WTC11 (cell line): ENCODE measurements at regions of chr2 and their contacts with region 1.

Region 1: GRCh38 chr2:117814417-117815264 is at the start of gene DDX18:
- DNase-seq: peak; percentile 95
- ATAC-seq: peak; percentile 95
- H3K4me3 Mint-ChIP-seq: peak within 1 kb of the TSS; percentile 94
- H3K27ac Mint-ChIP-seq: peak within 1 kb of the TSS; percentile 98
- H3K4me1 Mint-ChIP-seq: peaks cover 28% of the 10 kb centered on the region
- H3K27me3 Mint-ChIP-seq: no peaks in the 10 kb centered on the region
- CTCF ChIP-seq: peak; percentile 93
- total RNA-seq, gene DDX18: 76.2 to 107 TPM (median 83.3 TPM) in 3 replicates

Region 2: DNA sequence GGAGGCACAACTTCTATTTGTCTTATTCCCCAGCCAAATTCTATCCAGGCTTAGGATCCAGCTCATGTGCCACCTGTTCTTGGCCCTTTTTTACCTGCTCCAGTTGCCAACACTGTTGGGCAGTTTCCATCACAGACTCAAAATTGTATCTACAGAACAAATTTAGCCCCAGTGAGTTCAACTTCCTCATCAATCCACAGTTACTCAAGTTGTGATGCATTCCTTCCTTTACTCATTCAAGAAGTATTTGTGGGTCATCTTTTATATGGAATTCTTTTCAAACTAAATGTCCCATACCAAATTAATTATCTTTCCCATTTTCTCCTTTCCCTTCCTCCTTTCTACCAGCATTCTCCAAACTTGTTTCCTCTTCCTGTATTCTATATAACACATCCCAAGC is 12.8 kb before region 1 on chr2:
- CTCF ChIA-PET with region 1: interaction called, 10 read pairs
- POLR2A ChIA-PET with region 1: no interaction called
- DNase-seq: no peak
- ATAC-seq: no peak
- H3K4me3 Mint-ChIP-seq: no peak overlapping the region
- H3K27ac Mint-ChIP-seq: no peak overlapping the region
- H3K4me1 Mint-ChIP-seq: peaks cover 16% of the 10 kb centered on the region
- H3K27me3 Mint-ChIP-seq: peaks cover 21% of the 10 kb centered on the region
- CTCF ChIP-seq: no peak

Region 3: DNA sequence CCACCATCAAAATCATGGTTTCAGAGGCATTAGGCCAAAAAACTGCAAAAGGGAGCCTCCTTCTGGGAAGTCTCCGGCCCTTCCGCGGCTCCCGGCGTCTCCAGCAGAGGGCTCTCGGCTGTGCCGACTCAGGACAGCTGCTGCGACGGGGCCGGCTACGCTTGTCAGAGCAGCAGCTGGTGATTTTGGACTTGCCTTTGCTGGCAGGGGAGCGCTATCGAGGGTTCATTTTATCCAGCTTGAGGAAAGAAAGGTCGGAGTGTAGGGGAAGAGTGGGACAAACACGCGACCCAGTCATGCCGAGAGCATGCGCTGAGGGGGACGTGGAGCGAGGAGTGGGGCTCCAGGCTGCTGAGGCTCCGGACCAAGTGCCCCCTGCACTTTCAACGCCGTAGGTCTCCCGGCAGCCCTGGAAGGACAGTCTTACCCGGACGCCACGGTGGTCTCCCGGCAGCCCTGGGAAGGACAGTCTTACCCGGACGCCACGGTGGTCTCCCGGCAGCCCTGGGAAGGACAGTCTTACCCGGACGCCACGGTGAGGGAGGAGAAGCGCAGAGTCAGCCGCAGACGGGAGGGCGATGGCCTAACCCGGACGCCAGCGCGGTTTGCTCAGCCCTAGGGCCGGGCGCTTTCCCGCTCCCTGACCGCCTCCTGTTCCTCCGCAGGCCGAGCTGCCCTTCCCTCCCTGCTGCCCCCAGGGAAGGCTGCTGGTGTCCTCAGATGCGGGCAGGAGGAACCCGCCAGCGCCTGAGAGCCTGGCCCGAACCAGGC is 21.5 kb after region 1 on chr2:
- CTCF ChIA-PET with region 1: interaction called, 11 read pairs
- POLR2A ChIA-PET with region 1: no interaction called
- DNase-seq: peak; percentile 88
- ATAC-seq: peak; percentile 85
- H3K4me3 Mint-ChIP-seq: peak overlapping the region; percentile 67
- H3K27ac Mint-ChIP-seq: no peak overlapping the region
- H3K4me1 Mint-ChIP-seq: peaks cover 15% of the 10 kb centered on the region
- H3K27me3 Mint-ChIP-seq: peaks cover 9% of the 10 kb centered on the region
- CTCF ChIP-seq: peak; percentile 46; the same call in 1 of the 2 replicates

Region 4: DNA sequence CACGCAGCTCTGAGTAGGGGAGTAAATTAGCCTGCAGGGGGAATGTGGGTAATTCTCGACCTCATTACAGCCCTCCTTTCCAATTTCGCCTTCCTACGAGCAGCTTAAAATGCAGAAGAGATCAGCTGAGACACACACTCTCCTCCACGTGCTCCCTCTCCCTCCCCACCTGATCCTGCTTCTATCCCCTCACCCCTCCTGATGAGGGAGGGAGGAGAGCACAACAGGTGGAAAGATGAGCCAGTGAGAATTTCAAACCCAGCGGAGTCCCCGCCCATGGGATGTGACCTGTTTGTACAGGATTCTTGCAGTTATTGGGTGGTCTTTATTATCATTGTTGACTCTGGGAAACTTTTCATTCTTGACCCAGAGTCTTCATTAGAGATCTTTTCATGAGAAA is 35.4 kb after region 1 on chr2:
- CTCF ChIA-PET with region 1: interaction called, 10 read pairs
- POLR2A ChIA-PET with region 1: no interaction called
- DNase-seq: peak; percentile 52
- ATAC-seq: peak; percentile 95
- H3K4me3 Mint-ChIP-seq: peak overlapping the region; percentile 59
- H3K27ac Mint-ChIP-seq: peak overlapping the region; percentile 80
- H3K4me1 Mint-ChIP-seq: peaks cover 40% of the 10 kb centered on the region
- H3K27me3 Mint-ChIP-seq: peaks cover 14% of the 10 kb centered on the region
- CTCF ChIP-seq: no peak

Region 5: DNA sequence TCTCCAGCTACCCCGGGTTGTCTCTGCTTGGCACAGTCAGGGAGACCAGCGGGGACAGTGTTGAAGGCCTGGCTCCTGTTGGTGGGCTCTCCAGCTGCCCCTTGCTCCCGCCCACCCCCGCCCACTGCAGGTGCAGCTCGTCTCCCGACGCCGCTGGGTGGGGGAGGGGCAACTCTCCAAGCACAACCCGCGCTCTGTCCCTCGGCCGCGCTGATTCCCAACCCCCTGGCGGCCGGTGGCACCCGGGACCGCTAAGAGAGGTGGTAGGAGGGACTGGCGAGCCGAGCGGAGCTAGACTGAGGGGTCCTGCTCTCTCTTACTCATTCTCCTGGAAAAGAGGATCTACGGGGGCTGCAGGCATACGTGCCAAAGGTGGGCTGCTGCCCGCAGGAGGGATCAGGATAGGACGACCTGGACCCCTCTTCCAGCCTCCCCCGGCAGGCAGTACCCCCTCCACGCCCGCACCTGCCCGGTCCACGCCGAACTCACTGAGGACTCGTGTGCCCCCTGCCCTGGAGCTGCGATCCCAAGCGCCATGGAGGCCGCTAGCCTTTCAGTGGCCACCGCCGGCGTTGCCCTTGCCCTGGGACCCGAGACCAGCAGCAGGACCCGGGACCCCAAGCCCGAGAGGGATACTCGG is 44.4 kb after region 1 on chr2:
- CTCF ChIA-PET with region 1: interaction called, 16 read pairs
- POLR2A ChIA-PET with region 1: no interaction called
- DNase-seq: peak; percentile 75
- ATAC-seq: peak; percentile 82
- H3K4me3 Mint-ChIP-seq: peak overlapping the region; percentile 55
- H3K27ac Mint-ChIP-seq: no peak overlapping the region
- H3K4me1 Mint-ChIP-seq: peaks cover 4% of the 10 kb centered on the region
- H3K27me3 Mint-ChIP-seq: peaks cover 42% of the 10 kb centered on the region
- CTCF ChIP-seq: no peak